ENCODE measurements at regions of chr19 and their contacts with region 1.

Region 1: DNA sequence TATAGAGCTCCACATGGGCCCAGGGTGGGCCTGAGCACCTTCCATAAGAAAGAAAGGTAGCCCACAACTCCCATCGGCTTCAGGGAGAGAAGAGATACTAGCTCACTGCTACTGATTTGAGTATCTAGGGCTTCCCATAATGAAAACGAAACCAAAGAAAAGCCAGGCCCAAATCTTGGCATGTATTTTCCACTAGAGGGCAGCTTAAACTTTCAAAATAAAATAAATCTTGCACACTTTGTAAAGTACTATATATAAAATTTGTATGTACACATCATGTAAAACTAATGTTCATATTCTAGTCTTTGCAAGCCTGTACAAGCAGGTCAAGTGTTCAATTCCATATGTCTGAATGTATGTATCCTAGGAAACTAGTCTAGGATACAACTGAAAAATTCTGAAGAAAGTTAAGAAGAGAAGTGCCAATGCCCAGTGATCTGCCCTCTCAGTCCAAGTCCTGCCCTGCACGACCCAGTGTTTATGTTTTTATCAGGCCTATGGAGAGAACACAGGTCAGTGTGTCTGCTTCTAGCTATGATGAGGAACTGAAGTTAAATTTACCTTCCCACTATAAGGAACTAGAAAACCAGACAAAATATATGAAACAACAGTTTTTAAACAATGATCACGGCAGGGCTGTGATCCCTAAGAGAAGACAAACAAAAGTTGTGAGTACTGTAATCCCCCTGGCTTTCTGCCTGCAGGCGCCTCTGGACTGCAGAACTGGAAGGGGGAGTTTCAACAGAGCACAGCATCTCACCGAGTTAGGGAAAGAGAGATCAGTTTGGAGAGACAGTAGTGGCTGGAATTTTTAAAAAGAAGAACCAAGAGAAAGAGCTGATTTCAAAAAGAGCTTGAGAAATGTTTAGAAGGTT is 475.7 kb downstream of the UQCRFS1 start:
- DNase-seq: peak; percentile 3
- ATAC-seq: no peak; the same call in 2 of the 3 replicates
- H3K4me3 ChIP-seq: no peak overlapping the region
- H3K27ac ChIP-seq: no peak overlapping the region
- H3K4me1 ChIP-seq: no peaks in the 10 kb centered on the region
- H3K27me3 ChIP-seq: no peaks in the 10 kb centered on the region
- CTCF ChIP-seq: peak in 2 of 3 experiments; percentile 12 to 31; a peak in 3 of 6 replicates
- EP300 ChIP-seq: no peak
- POLR2A ChIP-seq: no peak
- RAD21 ChIP-seq: peak; percentile 34; the same call in 1 of the 2 replicates

Region 2: DNA sequence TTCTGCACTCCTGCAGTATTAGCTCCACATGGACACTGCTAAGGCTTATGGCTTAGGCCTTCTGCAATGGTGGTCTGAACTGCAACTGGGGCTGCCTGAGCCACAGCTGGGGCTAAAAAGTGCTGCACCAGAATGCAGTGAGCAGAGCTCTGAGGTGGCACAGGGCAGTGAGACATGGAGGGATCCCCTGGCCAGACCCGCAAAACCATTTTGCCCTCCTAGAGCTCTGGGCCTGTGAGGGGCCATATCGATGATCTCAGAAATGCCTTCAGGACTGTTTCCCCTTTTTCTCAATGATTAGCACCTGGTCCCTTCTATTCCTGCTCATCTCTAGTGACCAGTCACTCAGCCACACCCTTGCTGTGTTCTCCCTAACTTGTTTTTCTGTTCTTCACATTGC is 78.0 kb after region 1 on chr19:
- CTCF ChIA-PET with region 1: no interaction called
- POLR2A ChIA-PET with region 1: no interaction called
- RAD21 ChIA-PET with region 1: no interaction called
- SMC1A ChIA-PET with region 1: no interaction called
- in situ Hi-C with region 1: no loop called
- intact Hi-C with region 1: no loop called
- DNase-seq: no peak
- ATAC-seq: no peak
- H3K4me3 ChIP-seq: no peak overlapping the region
- H3K27ac ChIP-seq: no peak overlapping the region
- H3K4me1 ChIP-seq: no peaks in the 10 kb centered on the region
- H3K27me3 ChIP-seq: no peaks in the 10 kb centered on the region
- CTCF ChIP-seq: no peak
- EP300 ChIP-seq: no peak
- POLR2A ChIP-seq: no peak
- RAD21 ChIP-seq: no peak

Region 3: DNA sequence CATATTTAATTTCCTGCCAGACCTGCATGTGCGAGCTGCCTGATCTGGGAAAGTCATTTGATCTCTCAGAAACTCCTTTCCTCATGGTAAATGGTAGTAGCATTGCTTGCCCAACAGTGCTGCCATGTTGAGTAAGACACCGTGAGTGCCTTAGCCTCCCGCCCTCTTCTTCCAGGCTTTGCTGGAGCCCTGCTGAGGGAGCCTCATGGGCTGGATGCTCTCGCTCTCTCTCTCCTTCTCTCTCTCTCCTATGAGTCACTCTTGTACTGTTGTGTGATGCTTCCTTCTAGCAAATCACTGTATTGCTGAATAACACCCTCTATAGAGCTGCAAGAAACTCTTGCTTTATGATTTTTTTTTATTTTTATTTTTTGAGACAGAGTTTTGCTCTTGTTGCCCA is 110.2 kb after region 1 on chr19:
- CTCF ChIA-PET with region 1: no interaction called
- POLR2A ChIA-PET with region 1: no interaction called
- RAD21 ChIA-PET with region 1: no interaction called
- SMC1A ChIA-PET with region 1: no interaction called
- in situ Hi-C with region 1: no loop called
- intact Hi-C with region 1: no loop called
- DNase-seq: no peak
- ATAC-seq: no peak
- H3K4me3 ChIP-seq: no peak overlapping the region
- H3K27ac ChIP-seq: no peak overlapping the region
- H3K4me1 ChIP-seq: no peaks in the 10 kb centered on the region
- H3K27me3 ChIP-seq: no peaks in the 10 kb centered on the region
- CTCF ChIP-seq: no peak
- EP300 ChIP-seq: no peak
- POLR2A ChIP-seq: no peak
- RAD21 ChIP-seq: no peak

Region 4: DNA sequence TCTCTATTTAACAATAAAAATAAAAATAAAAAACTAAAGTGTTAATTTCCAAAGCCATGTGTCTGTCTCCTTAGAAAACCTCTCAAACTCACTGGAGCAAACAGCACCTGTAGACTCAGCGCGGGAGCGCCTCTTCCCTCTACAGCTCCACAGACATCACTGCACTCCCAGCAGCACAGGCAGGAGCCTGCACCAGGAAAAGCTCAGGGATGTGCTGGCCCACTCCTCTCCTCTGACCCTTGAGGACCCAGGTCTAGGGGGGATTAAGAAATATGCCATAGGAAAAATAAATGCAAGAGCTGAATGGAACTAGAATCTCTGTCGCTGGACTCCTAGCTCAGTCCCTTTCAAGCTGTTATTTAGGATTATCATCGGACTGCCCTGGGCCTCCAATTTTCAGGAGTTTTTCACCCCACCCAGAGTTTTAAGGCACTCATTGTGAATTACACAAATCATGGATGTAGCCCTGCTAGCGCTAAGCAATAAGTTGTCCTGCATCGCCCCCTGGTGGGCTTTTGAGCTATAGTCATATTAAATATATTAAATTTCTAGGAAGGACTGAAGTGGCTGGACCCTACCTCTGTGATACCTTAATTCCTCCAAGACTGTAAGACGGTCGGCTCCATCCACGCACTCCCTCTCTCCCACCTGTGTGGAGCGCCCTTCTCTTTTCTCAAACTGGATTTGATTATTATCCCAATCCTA is 141.8 kb after region 1 on chr19:
- CTCF ChIA-PET with region 1: interaction called, 40 read pairs
- POLR2A ChIA-PET with region 1: no interaction called
- RAD21 ChIA-PET with region 1: interaction called, 29 read pairs
- SMC1A ChIA-PET with region 1: interaction called, 39 read pairs
- in situ Hi-C with region 1: no loop called
- intact Hi-C with region 1: loop called (anchors 10 kb)
- DNase-seq: no peak
- ATAC-seq: peak; percentile 54; the same call in 2 of the 3 replicates
- H3K4me3 ChIP-seq: no peak overlapping the region
- H3K27ac ChIP-seq: no peak overlapping the region
- H3K4me1 ChIP-seq: no peaks in the 10 kb centered on the region
- H3K27me3 ChIP-seq: no peaks in the 10 kb centered on the region
- CTCF ChIP-seq: peak; percentile 32 to 60 (median 39); a peak in 5 of 6 replicates
- EP300 ChIP-seq: no peak
- POLR2A ChIP-seq: no peak
- RAD21 ChIP-seq: peak; percentile 79

Region 5: DNA sequence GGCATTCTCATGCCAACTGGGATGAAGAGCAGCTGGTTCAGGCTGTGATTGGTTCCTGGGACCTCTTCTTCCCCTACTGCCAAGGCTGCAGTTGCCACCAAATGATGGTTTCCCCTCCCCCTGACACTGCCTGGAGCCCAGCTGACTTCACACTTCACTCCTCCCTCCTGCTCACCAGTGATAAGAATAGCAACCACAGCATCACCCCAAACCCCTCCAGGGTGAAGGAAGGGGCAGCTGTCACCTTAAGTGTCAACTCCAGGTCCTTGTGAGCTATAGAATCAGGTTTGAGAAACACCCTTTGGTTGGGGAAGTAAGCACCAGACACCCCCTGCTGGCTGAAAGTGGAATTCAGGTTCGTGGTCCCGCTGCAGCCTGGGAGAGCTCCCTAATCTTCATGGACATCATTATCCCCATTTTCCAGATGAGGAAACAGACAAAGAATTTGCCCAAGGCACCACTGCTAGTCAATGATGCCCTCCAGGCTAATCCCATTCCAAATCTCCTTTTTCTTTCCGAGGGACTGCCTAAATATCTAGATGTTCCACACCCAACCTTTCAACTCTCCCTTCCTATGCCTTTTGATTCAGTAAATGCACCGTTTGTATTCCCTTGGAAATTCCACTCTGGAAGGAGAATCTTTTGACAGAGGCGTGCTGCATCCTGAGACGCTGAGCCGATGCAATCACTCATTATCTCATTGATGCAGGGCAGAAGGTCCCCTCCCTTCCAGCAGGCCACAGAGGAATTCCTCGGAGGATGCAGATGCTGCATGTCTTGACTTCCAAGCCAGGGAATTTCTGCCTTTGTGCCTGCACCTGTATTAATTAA is 526.3 kb after region 1 on chr19:
- CTCF ChIA-PET with region 1: interaction called, 34 read pairs
- POLR2A ChIA-PET with region 1: no interaction called
- RAD21 ChIA-PET with region 1: interaction called, 14 read pairs
- SMC1A ChIA-PET with region 1: interaction called, 17 read pairs
- in situ Hi-C with region 1: no loop called
- intact Hi-C with region 1: loop called (anchors 5 kb)
- DNase-seq: no peak
- ATAC-seq: peak; percentile 41; the same call in 2 of the 3 replicates
- H3K4me3 ChIP-seq: no peak overlapping the region
- H3K27ac ChIP-seq: no peak overlapping the region
- H3K4me1 ChIP-seq: no peaks in the 10 kb centered on the region
- H3K27me3 ChIP-seq: no peaks in the 10 kb centered on the region
- CTCF ChIP-seq: peak; percentile 68 to 78 (median 76)
- EP300 ChIP-seq: no peak
- POLR2A ChIP-seq: no peak
- RAD21 ChIP-seq: peak; percentile 56

Region 6: GRCh38 chr19:30011051-30011578 is 1273.9 kb after region 1 on chr19:
- CTCF ChIA-PET with region 1: no interaction called
- POLR2A ChIA-PET with region 1: no interaction called
- RAD21 ChIA-PET with region 1: no interaction called
- SMC1A ChIA-PET with region 1: no interaction called
- in situ Hi-C with region 1: no loop called
- intact Hi-C with region 1: no loop called
- DNase-seq: no peak
- ATAC-seq: no peak
- H3K4me3 ChIP-seq: no peak overlapping the region
- H3K27ac ChIP-seq: no peak overlapping the region
- H3K4me1 ChIP-seq: no peaks in the 10 kb centered on the region
- H3K27me3 ChIP-seq: no peaks in the 10 kb centered on the region
- CTCF ChIP-seq: no peak
- EP300 ChIP-seq: no peak
- POLR2A ChIP-seq: no peak
- RAD21 ChIP-seq: no peak